ENCODE measurements at regions of chr19 and their contacts with region 1.

Region 1: GRCh38 chr19:14136509-14137281 is at the start of gene ASF1B:
- DNase-seq: peak; percentile 99 to 100 (median 99)
- ATAC-seq: peak; percentile 92 to 96 (median 94)
- H3K4me3 ChIP-seq: peak within 1 kb of the TSS; percentile 43 to 97 (median 78)
- H3K27ac ChIP-seq: peak within 1 kb of the TSS; percentile 70 to 97 (median 93)
- H3K4me1 ChIP-seq: peaks cover 0 to 47% (median 28%) of the 10 kb centered on the region in 12 donors
- H3K27me3 ChIP-seq: no peaks in the 10 kb centered on the region
- CTCF ChIP-seq: peak; percentile 75 to 100 (median 88)
- POLR2A ChIP-seq: peak in 1 of 2 donors; percentile 80
- total RNA-seq, gene ASF1B: 0.42 to 7.0 (median 0.91) TPM

Region 2: DNA sequence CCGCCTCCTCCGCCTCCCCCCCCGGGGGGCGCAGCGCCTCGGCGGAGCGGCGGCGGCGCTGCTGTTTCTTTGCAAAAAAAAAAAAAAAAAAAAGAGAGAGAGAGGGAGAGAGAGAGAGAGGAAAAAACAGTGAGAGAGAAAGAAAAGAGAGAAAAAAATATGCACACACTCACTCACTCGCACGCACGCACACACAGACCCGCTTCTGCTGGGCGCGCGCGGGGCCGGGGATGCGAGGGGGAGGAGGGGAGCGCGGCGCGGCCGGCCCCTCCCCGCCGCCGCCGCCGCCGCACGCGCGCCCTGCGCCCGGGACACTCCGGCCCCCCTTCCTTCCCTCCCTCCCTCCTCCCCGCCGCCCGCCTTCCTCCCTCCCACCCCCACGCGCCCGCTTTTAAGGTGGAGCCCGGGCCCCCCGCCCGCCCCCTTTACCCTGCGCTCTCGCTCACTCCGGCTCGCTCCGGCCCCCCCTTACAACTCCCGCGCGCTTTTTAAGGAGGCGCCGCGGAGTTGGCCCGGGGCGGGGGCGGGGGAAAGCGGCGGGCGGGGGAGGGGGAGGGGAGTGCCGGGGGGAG is 46.1 kb before region 1 on chr19 and contains the start of gene SAMD1:
- intact Hi-C with region 1: loop called in 1 of 10 experiments (anchors 1 kb)
- DNase-seq: peak; percentile 94 to 97 (median 94)
- ATAC-seq: peak; percentile 67 to 74 (median 72)
- H3K4me3 ChIP-seq: peak within 1 kb of the TSS; percentile 61 to 96 (median 88)
- H3K27ac ChIP-seq: peak within 1 kb of the TSS; percentile 89 to 99 (median 96)
- H3K4me1 ChIP-seq: peaks cover 0 to 19% (median 12%) of the 10 kb centered on the region in 12 donors
- H3K27me3 ChIP-seq: no peaks in the 10 kb centered on the region
- CTCF ChIP-seq: no peak
- POLR2A ChIP-seq: no peak
- total RNA-seq, gene SAMD1: 30.5 to 55.5 (median 38.3) TPM

Region 3: DNA sequence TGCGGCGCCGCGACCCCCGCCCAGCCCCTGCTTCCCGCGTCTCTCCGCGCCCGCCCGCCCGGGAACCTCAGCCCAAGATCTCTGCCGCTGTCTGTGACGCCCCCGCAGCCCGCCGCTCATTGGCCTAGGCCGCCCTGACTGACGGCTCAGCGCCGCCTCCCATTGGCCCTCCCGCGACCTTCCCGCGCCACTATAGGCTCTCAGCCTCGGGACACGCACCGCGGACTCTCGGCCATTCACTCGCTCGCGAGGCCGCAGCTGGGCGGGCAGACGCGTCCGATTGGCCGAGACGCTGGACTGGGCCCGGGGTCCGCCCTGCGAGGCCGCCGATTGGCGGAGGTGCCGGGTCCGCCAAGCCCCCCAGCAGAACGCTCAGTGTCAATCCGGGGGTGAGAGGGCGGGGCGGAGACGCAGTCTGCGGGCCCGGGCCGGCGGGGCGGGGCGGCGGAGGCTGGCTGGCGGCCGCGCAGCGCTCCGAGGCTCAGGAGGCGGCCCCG is 19.0 kb before region 1 on chr19 and contains the start of gene PRKACA:
- intact Hi-C with region 1: loop called in 1 of 10 experiments (anchors 1 kb)
- DNase-seq: peak; percentile 99 to 100 (median 100)
- ATAC-seq: peak; percentile 87 to 94 (median 92)
- H3K4me3 ChIP-seq: peak within 1 kb of the TSS; percentile 52 to 98 (median 92)
- H3K27ac ChIP-seq: peak within 1 kb of the TSS; percentile 93 to 100 (median 99)
- H3K4me1 ChIP-seq: peaks cover 27 to 67% (median 58%) of the 10 kb centered on the region in 12 donors
- H3K27me3 ChIP-seq: no peaks in the 10 kb centered on the region
- CTCF ChIP-seq: no peak
- POLR2A ChIP-seq: peak in 1 of 2 donors; percentile 72
- total RNA-seq, gene PRKACA: 216 to 554 (median 459) TPM

Region 4: GRCh38 chr19:14472202-14472938 is 335.7 kb after region 1 on chr19:
- intact Hi-C with region 1: loop called in 5 of 10 experiments (anchors 5 to 10 kb)
- DNase-seq: peak; percentile 72 to 89 (median 74)
- ATAC-seq: peak in 3 of 4 donors; percentile 46 to 61 (median 56)
- H3K4me3 ChIP-seq: peak overlapping the region in 8 of 12 donors; percentile 5 to 37 (median 22)
- H3K27ac ChIP-seq: no peak overlapping the region
- H3K4me1 ChIP-seq: peaks cover 4 to 52% (median 22%) of the 10 kb centered on the region in 12 donors
- H3K27me3 ChIP-seq: peaks cover 0 to 39% (median 16%) of the 10 kb centered on the region in 9 donors
- CTCF ChIP-seq: peak; percentile 96 to 99 (median 97)
- POLR2A ChIP-seq: no peak

Region 5: GRCh38 chr19:14496028-14496833 is 359.5 kb after region 1 on chr19 and contains the start of gene GIPC1:
- intact Hi-C with region 1: loop called in 1 of 10 experiments (anchors 10 kb)
- DNase-seq: peak; percentile 97 to 98 (median 98)
- ATAC-seq: peak; percentile 97 to 99 (median 98)
- H3K4me3 ChIP-seq: peak within 1 kb of the TSS; percentile 64 to 96 (median 91)
- H3K27ac ChIP-seq: peak within 1 kb of the TSS in 11 of 12 donors; percentile 56 to 88 (median 75)
- H3K4me1 ChIP-seq: peaks cover 5 to 33% (median 22%) of the 10 kb centered on the region in 12 donors
- H3K27me3 ChIP-seq: no peaks in the 10 kb centered on the region
- CTCF ChIP-seq: no peak
- POLR2A ChIP-seq: peak in 1 of 2 donors; percentile 53
- total RNA-seq, gene GIPC1: 44.9 to 82.7 (median 49.3) TPM

Measured in heart left ventricle (tissue), 16 donors.